ENCODE measurements at regions of chr17 and their contacts with region 1.

Region 1: GRCh38 chr17:48011405-48012150 is 26.0 kb downstream of the COPZ2 start:
- DNase-seq: peak; percentile 57 to 81 (median 68)
- ATAC-seq: peak; percentile 88
- H3K4me3 ChIP-seq: peak overlapping the region; percentile 12; the same call in 1 of the 2 replicates
- H3K27ac ChIP-seq: 0 out of 3 replicates have a peak overlapping the region, but pooled peaks have one; percentile 21
- H3K4me1 ChIP-seq: peaks cover 22 to 23% of the 10 kb centered on the region in 2 experiments
- H3K27me3 ChIP-seq: no peaks in the 10 kb centered on the region
- CTCF ChIP-seq: peak; percentile 71 to 77 (median 72)
- EP300 ChIP-seq: no peak
- POLR2A ChIP-seq: no peak
- RAD21 ChIP-seq: peak; percentile 34 to 67

Region 2: GRCh38 chr17:47978324-47978723 is 33.3 kb before region 1 on chr17:
- CTCF ChIA-PET with region 1: interaction called, 4 read pairs
- POLR2A ChIA-PET with region 1: interaction called, 3 read pairs
- in situ Hi-C with region 1: loop called (anchors 5 kb)
- intact Hi-C with region 1: loop called (anchors 2 kb)
- DNase-seq: peak; percentile 76 to 83 (median 82)
- ATAC-seq: peak; percentile 81
- H3K4me3 ChIP-seq: no peak overlapping the region
- H3K27ac ChIP-seq: no peak overlapping the region
- H3K4me1 ChIP-seq: peaks cover 32 to 42% of the 10 kb centered on the region in 2 experiments
- H3K27me3 ChIP-seq: no peaks in the 10 kb centered on the region
- CTCF ChIP-seq: peak; percentile 72 to 79 (median 78)
- EP300 ChIP-seq: no peak
- POLR2A ChIP-seq: no peak
- RAD21 ChIP-seq: peak; percentile 78 to 85

Region 3: DNA sequence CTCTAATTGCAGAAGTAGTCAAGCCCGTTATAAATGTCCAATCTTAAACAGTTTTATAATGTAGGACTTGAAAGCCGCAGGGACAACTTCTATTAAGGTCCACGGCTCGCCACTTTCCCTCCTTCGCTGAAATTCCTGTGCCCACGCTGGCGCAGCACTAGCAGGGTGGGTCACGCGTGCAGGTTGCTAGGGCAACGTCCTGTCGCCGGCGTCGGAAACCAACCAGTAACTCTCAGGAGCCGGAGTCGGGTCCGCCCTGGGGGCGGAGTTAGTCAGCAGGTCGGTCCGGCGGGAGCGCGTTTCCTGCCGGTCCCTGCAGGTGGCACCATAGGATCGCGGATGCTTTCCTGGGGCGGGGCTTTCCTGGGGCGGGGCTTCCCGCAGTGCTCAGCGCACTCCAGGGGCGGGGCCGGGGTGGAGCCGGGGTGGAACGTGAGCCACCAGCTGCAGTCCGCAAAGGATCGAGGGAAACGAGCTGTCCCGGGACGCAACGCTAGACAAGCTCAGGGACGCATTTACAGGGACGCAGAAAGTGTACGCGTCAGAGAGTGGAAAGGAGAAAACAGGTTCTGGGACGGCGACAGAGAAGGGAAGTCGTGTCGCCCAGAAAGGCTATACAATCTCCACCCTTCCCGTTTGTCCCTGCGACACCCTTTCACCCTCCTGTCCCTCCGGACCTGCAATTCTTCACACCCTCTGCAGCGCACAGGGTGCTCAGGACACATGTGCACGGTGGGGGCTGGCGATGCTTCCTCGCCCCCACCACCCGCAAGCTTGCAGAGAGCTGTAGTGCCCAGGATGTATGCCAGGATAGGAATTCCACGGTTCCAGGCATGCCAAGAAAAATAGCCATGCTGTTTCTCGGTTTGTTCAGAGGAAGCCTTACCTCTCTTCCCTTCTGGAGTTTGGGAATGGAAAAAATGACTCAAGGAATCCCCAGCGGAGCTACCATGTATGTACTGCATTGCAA is 13.6 kb after region 1 on chr17:
- CTCF ChIA-PET with region 1: no interaction called
- POLR2A ChIA-PET with region 1: no interaction called
- in situ Hi-C with region 1: no loop called
- intact Hi-C with region 1: no loop called
- DNase-seq: peak; percentile 95 to 97 (median 96)
- ATAC-seq: peak; percentile 94
- H3K4me3 ChIP-seq: peak overlapping the region; percentile 41
- H3K27ac ChIP-seq: peak overlapping the region; percentile 8; the same call in 1 of the 3 replicates
- H3K4me1 ChIP-seq: peaks cover 23 to 39% of the 10 kb centered on the region in 2 experiments; a peak in 4 of 5 replicates
- H3K27me3 ChIP-seq: no peaks in the 10 kb centered on the region
- CTCF ChIP-seq: peak; percentile 83 to 96 (median 91)
- EP300 ChIP-seq: no peak
- POLR2A ChIP-seq: no peak
- RAD21 ChIP-seq: peak; percentile 84 to 92